Activated B cell treated with CpG ODN at 0.5 μM for 24 hours (primary cell): ENCODE measurements at regions of chr3 and their contacts with region 1.

Region 1: GRCh38 chr3:186259612-186260383 is 102.2 kb downstream of the DGKG start:
- DNase-seq: peak; percentile 66
- ATAC-seq: peak; percentile 62
- H3K4me3 Mint-ChIP-seq: no peak overlapping the region
- H3K27ac Mint-ChIP-seq: peak overlapping the region; percentile 76
- H3K4me1 Mint-ChIP-seq: peaks cover 40% of the 10 kb centered on the region
- H3K27me3 Mint-ChIP-seq: no peaks in the 10 kb centered on the region
- CTCF ChIP-seq: peak; percentile 13

Region 2: GRCh38 chr3:185937689-185938463 is 321.9 kb before region 1 on chr3 and contains the start of gene TRA2B:
- CTCF ChIA-PET with region 1: no interaction called
- POLR2A ChIA-PET with region 1: interaction called, 5 read pairs
- intact Hi-C with region 1: loop called (anchors 1 kb)
- DNase-seq: peak; percentile 96
- ATAC-seq: peak; percentile 87
- H3K4me3 Mint-ChIP-seq: peak within 1 kb of the TSS; percentile 99
- H3K27ac Mint-ChIP-seq: peak within 1 kb of the TSS; percentile 100
- H3K4me1 Mint-ChIP-seq: peaks cover 45% of the 10 kb centered on the region
- H3K27me3 Mint-ChIP-seq: no peaks in the 10 kb centered on the region
- CTCF ChIP-seq: no peak
- total RNA-seq, gene TRA2B: 213 and 219 TPM in 2 replicates

Region 3: GRCh38 chr3:185959609-185960517 is 299.9 kb before region 1 on chr3:
- CTCF ChIA-PET with region 1: no interaction called
- POLR2A ChIA-PET with region 1: no interaction called
- intact Hi-C with region 1: no loop called
- DNase-seq: no peak
- ATAC-seq: no peak
- H3K4me3 Mint-ChIP-seq: no peak overlapping the region
- H3K27ac Mint-ChIP-seq: no peak overlapping the region
- H3K4me1 Mint-ChIP-seq: no peaks in the 10 kb centered on the region
- H3K27me3 Mint-ChIP-seq: peaks cover 23% of the 10 kb centered on the region
- CTCF ChIP-seq: no peak

Region 4: DNA sequence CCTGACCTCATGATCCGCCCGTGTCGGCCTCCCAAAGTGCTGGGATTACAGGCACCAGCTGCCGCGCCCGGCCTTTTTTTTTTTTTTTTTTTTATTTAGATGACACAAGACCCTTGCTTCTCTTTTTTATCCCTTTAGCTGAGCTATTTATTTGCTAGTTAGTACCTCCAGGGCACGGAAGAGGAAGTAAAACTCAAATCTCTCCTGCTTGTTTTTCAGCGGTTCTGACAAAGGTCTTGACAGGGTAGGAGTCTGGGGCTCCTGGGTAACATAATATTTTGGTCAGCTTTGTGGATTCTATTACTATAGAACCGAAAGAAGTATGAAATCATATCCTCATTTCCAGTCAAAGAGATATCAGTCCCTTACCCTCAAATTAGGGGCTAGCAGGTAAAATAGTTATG is 106.9 kb before region 1 on chr3:
- CTCF ChIA-PET with region 1: no interaction called
- POLR2A ChIA-PET with region 1: no interaction called
- intact Hi-C with region 1: loop called (anchors 2 kb)
- DNase-seq: no peak
- ATAC-seq: peak; percentile 92
- H3K4me3 Mint-ChIP-seq: peak overlapping the region; percentile 67
- H3K27ac Mint-ChIP-seq: peak overlapping the region; percentile 87
- H3K4me1 Mint-ChIP-seq: peaks cover 30% of the 10 kb centered on the region
- H3K27me3 Mint-ChIP-seq: no peaks in the 10 kb centered on the region
- CTCF ChIP-seq: no peak

Region 5: DNA sequence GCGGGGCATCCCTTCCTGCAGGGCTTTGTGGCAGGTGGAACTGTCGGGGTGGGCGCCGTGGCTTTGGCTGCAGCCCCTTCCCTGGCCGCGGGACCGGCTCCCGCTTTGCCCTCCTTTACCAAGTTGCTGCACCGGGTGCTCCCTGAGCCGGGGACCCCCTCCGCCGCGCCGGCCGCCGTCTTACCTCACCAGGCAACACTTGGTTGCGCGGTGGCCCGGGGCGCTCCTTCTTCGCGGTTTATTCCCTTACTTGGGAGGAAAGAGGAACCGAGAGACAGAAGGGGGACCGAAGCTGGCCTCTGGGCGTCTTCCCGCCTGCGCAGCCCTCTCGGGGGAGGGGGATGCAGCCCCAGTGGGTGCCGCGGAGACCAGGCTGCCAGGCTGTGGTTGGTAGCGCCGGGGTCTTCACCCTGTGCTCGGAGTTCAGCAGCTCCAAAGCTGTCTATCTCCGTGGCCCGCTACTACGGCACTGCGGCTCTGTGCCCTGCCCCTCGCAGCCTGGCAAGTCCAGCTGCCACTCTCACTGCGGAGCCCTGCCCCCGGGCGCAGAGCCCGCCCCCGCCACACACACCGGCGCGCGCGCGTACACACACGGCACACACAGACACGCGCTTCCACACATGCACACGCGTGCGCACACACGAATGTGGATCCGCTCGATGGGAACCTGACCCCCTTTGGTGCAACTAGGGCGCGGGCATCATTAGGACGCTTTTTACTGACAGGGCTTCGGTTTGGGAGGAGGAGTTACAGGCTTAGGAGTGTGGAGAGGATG is 102.2 kb after region 1 on chr3 and contains the start of gene DGKG:
- CTCF ChIA-PET with region 1: interaction called, 5 read pairs
- POLR2A ChIA-PET with region 1: no interaction called
- intact Hi-C with region 1: loop called (anchors 2 kb)
- DNase-seq: peak; percentile 64
- ATAC-seq: peak; percentile 90
- H3K4me3 Mint-ChIP-seq: peak within 1 kb of the TSS; percentile 83
- H3K27ac Mint-ChIP-seq: peak within 1 kb of the TSS; percentile 38
- H3K4me1 Mint-ChIP-seq: peaks cover 28% of the 10 kb centered on the region
- H3K27me3 Mint-ChIP-seq: peaks cover 7% of the 10 kb centered on the region
- CTCF ChIP-seq: no peak
- total RNA-seq, gene DGKG: 3.9 and 4.2 TPM in 2 replicates

Region 6: GRCh38 chr3:186534113-186534669 is 274.4 kb after region 1 on chr3:
- CTCF ChIA-PET with region 1: interaction called, 346 read pairs
- POLR2A ChIA-PET with region 1: interaction called, 24 read pairs
- intact Hi-C with region 1: loop called (anchors 1 kb)
- DNase-seq: no peak
- ATAC-seq: peak; percentile 82
- H3K4me3 Mint-ChIP-seq: peak overlapping the region; percentile 77
- H3K27ac Mint-ChIP-seq: peak overlapping the region; percentile 97
- H3K4me1 Mint-ChIP-seq: peaks cover 83% of the 10 kb centered on the region
- H3K27me3 Mint-ChIP-seq: no peaks in the 10 kb centered on the region
- CTCF ChIP-seq: no peak

Region 7: DNA sequence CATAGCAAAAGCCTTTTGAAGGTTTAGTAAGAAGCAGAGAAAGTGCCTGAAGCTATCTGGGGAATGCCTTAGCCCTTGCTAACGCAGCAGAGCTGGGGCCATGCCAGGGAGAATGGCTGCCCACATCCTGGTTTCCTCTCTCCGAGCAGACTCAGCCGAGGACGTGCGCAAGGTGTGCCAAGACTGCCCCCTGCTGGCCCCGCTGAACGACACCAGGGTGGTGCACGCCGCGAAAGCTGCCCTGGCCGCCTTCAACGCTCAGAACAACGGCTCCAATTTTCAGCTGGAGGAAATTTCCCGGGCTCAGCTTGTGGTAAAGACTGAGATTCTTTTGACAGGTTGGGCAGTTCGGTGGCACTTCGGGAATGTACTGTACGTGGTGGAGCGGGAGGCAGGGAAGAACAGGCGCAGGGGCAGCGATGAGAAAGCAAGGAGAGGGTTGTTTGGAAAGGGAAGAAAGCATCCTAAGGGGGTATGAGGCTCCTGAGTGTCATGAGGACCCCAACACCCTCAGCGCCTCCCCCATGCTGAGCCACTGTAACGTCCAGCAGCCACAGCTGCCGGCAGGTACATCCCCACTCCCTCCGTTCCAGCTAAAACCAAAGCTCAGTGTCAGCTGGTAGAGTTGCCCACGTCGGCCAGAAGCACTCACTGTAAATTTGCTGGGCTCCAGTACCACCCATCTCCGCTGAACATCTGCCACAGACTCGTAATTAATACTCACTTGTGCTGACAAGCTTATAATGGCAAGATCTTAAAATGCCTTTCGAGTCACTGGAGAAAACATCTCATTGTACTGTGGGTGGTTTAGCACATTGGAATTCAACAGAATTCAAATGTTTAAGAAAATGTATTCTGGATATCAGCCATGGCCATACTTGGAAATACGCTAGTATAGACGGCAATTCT is 357.5 kb after region 1 on chr3:
- CTCF ChIA-PET with region 1: interaction called, 7 read pairs
- POLR2A ChIA-PET with region 1: no interaction called
- intact Hi-C with region 1: loop called (anchors 1 kb)
- DNase-seq: peak; percentile 65
- ATAC-seq: peak; percentile 97
- H3K4me3 Mint-ChIP-seq: peak overlapping the region; percentile 58
- H3K27ac Mint-ChIP-seq: no peak overlapping the region
- H3K4me1 Mint-ChIP-seq: peaks cover 16% of the 10 kb centered on the region
- H3K27me3 Mint-ChIP-seq: peaks cover 43% of the 10 kb centered on the region
- CTCF ChIP-seq: peak; percentile 47